ENCODE measurements at regions of chr20 and their contacts with region 1.

Region 1: GRCh38 chr20:3045816-3046676 is at the start of gene MRPS26:
- DNase-seq: peak; percentile 55 to 94
- H3K4me3 ChIP-seq: peak within 1 kb of the TSS; percentile 89 to 93
- H3K27ac ChIP-seq: peak within 1 kb of the TSS; percentile 91 to 92
- H3K4me1 ChIP-seq: peaks cover 7 to 21% of the 10 kb centered on the region in 2 donors
- H3K27me3 ChIP-seq: no peaks in the 10 kb centered on the region
- CTCF ChIP-seq: no peak
- total RNA-seq, gene MRPS26: 56.4 TPM

Region 2: DNA sequence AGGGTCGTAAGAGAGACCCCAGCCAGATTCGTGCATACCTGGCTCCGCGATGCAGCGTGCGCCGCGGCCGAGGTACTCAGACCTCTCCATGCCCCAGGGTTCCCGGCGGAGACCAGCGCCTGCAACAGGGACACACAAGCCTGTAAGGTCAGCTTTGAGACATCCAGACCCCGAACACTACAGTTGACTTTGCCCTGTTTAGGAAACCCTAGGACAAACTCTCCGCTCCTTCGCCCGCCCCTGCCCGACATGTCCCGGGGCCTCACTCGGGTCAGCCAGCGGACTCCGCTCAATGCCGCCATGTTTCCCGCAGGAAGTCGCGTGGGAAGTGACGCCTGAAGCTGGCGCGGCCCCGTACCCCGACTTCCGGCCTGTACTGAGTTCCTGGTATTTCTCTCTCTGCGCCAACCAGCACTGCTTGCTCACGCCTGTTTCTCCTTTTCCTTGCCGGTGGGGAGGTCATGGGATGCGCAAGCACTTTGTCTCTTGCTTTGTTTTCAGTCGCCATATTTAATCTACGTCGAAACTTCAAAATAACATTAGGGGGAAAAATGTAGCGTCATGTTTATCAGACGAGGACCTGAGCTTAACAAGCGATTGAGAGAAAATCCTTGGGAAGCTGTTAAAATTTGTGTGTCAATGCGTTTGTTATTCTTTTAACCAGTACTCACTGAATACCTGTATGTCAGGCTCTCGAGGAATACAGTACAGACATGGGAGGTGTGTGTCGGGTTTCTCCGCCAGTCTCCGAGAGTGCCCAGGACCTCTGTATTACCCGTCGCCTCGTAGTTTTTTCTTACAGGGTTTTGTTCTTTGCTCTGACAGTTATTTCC is 381.9 kb before region 1 on chr20 and contains the start of gene IDH3B:
- intact Hi-C with region 1: loop called (anchors 10 kb)
- DNase-seq: peak; percentile 80 to 97
- H3K4me3 ChIP-seq: peak within 1 kb of the TSS; percentile 77 to 81
- H3K27ac ChIP-seq: peak within 1 kb of the TSS; percentile 82 to 86
- H3K4me1 ChIP-seq: peaks cover 3 to 10% of the 10 kb centered on the region in 2 donors
- H3K27me3 ChIP-seq: no peaks in the 10 kb centered on the region
- CTCF ChIP-seq: no peak
- total RNA-seq, gene IDH3B: 24.9 TPM

Region 3: DNA sequence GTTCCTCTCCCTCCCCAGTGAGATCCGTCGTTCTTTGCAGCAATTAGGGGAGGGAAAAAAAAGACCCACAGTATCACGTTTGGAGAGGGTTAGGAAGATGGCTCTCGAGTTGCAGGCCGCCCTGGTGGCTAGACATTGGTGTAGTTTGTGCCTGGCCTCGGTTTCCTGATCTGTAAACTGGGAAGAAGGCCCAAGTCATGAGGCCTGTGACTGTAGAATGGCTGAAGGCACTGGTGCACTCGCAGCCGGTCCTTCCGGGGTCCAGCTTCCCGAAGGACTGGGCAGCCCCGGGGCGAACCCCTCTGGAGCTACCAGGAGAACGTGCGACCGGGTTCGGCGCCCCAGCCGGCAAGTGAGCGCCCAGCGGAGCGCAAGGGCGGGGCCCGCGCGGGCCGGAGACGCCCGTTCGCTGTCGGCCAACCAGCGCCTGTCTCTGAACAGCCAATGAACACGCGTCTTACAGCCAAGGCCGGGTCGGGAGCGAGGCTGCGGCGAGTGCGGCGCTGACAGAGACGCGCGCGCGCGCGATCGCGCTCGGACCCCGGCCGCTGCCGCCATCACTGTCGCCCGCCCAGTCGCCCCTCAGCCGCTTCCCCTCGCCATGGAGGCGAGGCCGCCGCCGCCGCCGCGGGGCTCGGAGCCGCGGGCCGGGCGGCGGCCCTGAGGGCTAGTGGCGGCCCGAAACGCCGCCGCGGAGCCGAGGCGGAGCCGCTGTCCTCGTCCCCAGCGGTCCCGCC is 172.9 kb before region 1 on chr20 and contains the start of gene PTPRA:
- intact Hi-C with region 1: loop called (anchors 2 kb)
- DNase-seq: peak; percentile 71 to 94
- H3K4me3 ChIP-seq: peak within 1 kb of the TSS; percentile 81 to 96
- H3K27ac ChIP-seq: peak within 1 kb of the TSS; percentile 62 to 66
- H3K4me1 ChIP-seq: peaks cover 4 to 8% of the 10 kb centered on the region in 2 donors
- H3K27me3 ChIP-seq: no peaks in the 10 kb centered on the region
- CTCF ChIP-seq: no peak
- total RNA-seq, gene PTPRA: 24.2 TPM

Region 4: DNA sequence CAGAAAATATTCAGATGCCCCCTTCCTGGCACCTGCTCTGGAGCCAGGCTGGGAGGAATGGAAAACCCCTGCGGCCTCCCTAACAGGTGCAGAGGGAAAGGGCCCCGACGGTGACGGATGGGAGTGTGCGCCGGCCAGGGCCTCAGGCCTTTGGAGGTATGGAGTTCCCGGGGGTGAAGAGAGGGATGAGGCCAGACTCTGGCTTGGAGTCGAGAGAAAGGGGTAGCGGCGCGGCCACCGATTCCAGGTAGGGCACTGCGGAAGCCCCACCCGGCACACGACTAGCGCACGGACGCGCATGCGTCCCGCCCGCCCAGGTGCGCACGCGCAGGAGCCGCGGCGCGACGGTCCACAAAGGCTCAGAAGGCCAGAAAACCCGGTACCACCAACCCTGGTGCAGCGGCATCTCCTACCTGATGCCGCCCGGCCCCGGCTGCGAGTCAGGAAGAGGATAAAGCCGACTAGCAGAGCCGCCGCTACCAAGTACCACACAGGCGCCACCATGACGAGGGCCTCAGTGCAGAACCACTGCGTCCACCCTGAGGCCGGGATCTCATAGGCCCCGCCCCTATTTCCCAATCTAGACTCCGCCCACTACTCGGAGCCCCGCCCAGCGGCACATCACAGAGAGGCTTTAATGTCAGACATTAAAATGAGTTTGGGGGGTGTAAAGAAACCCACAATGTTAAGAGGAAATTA is 158.2 kb after region 1 on chr20 and contains the start of gene DDRGK1:
- intact Hi-C with region 1: loop called (anchors 1 kb)
- DNase-seq: peak; percentile 51 to 94
- H3K4me3 ChIP-seq: peak within 1 kb of the TSS; percentile 72 to 90
- H3K27ac ChIP-seq: peak within 1 kb of the TSS; percentile 78 to 89
- H3K4me1 ChIP-seq: peaks cover 7 to 10% of the 10 kb centered on the region in 2 donors
- H3K27me3 ChIP-seq: no peaks in the 10 kb centered on the region
- CTCF ChIP-seq: no peak
- total RNA-seq, gene DDRGK1: 18.0 TPM